ENCODE measurements at regions of chr4 and their contacts with region 1.

Region 1: DNA sequence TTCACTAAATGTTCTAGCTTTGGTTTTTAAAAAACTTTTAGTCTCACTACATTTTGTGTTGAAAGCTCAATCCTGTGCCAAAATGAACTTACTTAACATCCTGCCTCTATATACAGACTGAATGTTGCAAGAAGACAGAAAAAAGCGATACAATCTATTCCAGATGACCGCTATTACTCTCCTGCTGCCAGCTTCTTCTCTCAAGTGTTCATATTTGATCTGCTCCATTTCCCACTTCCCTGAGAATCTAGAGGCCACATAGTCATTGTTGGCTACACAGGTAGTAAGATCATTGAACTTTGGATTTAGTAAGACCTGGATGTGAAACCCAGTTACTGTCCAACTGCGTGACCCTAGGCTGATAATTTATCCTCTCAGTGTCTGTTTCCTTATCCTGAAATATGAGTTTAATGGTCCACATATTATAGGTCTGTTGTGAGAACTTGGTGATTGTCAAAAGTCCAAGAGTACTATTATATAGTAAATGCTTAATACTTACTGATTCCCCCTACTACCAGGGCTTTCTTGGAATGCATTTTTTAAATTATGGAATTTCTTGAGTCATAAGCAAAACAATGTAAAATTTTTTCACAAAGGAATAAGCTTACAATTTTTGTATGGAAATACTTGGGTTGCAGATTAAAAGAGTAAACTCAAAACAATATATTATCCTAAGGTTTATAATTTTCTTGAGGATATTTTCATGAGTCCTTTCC is 976.8 kb upstream of the ADGRL3 start:
- DNase-seq: no peak
- ATAC-seq: no peak
- H3K4me3 ChIP-seq: no peak overlapping the region
- H3K27ac ChIP-seq: no peak overlapping the region
- H3K4me1 ChIP-seq: no peaks in the 10 kb centered on the region
- H3K27me3 ChIP-seq: no peaks in the 10 kb centered on the region
- CTCF ChIP-seq: no peak

Region 2: GRCh38 chr4:60122820-60123219 is 100.5 kb before region 1 on chr4:
- CTCF ChIA-PET with region 1: no interaction called
- POLR2A ChIA-PET with region 1: no interaction called
- in situ Hi-C with region 1: no loop called
- intact Hi-C with region 1: no loop called
- DNase-seq: no peak
- ATAC-seq: no peak
- H3K4me3 ChIP-seq: no peak overlapping the region
- H3K27ac ChIP-seq: no peak overlapping the region
- H3K4me1 ChIP-seq: no peaks in the 10 kb centered on the region
- H3K27me3 ChIP-seq: no peaks in the 10 kb centered on the region
- CTCF ChIP-seq: no peak

Region 3: DNA sequence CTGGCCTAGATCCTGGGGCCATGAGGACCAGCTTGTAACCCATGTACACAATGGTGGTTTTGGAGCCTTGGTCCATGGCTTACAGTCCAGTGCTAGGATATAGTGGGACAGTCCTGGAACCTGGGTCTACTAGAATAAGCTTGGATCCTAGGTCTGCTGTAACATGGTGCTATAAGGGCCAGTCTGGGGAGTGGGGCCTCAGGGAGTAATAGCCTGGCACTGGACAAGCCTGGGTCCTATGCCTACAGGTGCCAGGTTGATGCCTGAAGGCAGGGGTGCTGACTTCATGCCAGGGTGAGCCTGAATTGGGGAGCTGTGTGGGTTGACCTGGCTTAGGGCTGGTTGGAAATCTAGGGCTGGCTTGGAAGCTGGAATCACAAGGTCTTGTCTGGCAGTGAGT is 220.4 kb after region 1 on chr4:
- CTCF ChIA-PET with region 1: no interaction called
- POLR2A ChIA-PET with region 1: no interaction called
- in situ Hi-C with region 1: no loop called
- intact Hi-C with region 1: loop called (anchors 10 kb)
- DNase-seq: no peak
- ATAC-seq: no peak
- H3K4me3 ChIP-seq: no peak overlapping the region
- H3K27ac ChIP-seq: no peak overlapping the region
- H3K4me1 ChIP-seq: no peaks in the 10 kb centered on the region
- H3K27me3 ChIP-seq: no peaks in the 10 kb centered on the region
- CTCF ChIP-seq: no peak